GM12878 (cell line): ENCODE measurements at regions of chr1 and their contacts with region 1.

Region 1: DNA sequence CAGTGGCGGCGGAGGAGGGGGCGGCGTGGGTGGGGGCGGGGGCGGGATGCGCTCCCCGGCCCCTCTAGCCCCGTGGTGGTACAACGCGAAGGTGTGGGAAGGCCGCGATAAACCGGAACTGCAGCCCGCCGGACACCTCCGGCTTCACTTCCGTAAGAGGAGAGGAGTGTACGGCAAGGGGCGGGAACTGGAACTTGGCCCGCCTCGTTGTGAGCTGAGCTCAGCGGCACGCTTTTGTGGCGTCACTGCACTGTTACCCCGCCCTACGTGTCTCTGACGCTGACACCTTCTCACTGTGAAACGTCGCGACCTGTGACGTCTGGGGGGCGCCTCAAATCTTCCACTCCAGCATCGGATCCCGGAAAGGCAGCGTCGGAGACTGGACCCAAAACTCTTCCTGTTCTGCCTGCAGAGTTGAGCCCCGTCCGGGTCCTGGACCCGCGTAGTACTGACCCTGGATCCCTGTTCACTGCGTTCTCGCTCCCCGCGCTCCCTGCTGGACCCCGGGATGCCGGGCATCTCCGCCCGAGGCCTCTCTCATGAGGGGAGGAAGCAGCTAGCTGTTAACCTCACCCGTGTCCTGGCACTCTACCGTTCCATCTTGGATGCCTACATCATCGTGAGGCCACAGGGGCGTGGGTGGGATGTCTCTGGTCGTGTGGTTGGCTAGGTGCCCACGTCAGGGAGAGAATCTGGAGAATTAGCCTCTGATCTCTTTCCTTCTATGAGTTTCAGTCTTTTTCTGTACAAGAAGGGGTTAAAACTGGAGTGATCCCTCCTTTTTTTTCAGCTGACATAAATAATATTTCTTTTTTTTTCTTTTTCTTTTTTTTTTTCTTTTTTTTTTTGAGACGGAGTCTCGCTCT is at the start of gene ISG20L2:
- DNase-seq: peak; percentile 92
- ATAC-seq: peak; percentile 85
- H3K4me3 ChIP-seq: peak within 1 kb of the TSS; percentile 100
- H3K27ac ChIP-seq: peak within 1 kb of the TSS; percentile 91
- H3K4me1 ChIP-seq: peaks cover 9% of the 10 kb centered on the region
- H3K27me3 ChIP-seq: no peaks in the 10 kb centered on the region
- CTCF ChIP-seq: no peak; a peak in 1 of 6 replicates
- EP300 ChIP-seq: peak in 1 of 2 experiments; percentile 14; a peak in 1 of 4 replicates
- POLR2A ChIP-seq: peak; percentile 92
- RAD21 ChIP-seq: no peak
- polyA plus RNA-seq, gene ISG20L2: 16.4 to 26.1 TPM

Region 2: GRCh38 chr1:156677616-156678596 is 50.9 kb before region 1 on chr1:
- CTCF ChIA-PET with region 1: interaction called, 433 read pairs
- POLR2A ChIA-PET with region 1: interaction called, 3 read pairs
- RAD21 ChIA-PET with region 1: interaction called, 3 read pairs
- SMC1A ChIA-PET with region 1: interaction called, 13 read pairs
- in situ Hi-C with region 1: no loop called
- intact Hi-C with region 1: no loop called
- DNase-seq: no peak
- ATAC-seq: peak; percentile 70
- H3K4me3 ChIP-seq: no peak overlapping the region
- H3K27ac ChIP-seq: no peak overlapping the region
- H3K4me1 ChIP-seq: peaks cover 9% of the 10 kb centered on the region
- H3K27me3 ChIP-seq: peaks cover 16 to 21% of the 10 kb centered on the region in 2 experiments
- CTCF ChIP-seq: peak; percentile 79 to 86 (median 83)
- EP300 ChIP-seq: no peak
- POLR2A ChIP-seq: no peak
- RAD21 ChIP-seq: peak; percentile 96

Region 3: GRCh38 chr1:156712626-156713025 is 16.2 kb before region 1 on chr1:
- CTCF ChIA-PET with region 1: interaction called, 53 read pairs
- POLR2A ChIA-PET with region 1: interaction called, 5 read pairs
- RAD21 ChIA-PET with region 1: interaction called, 15 read pairs
- SMC1A ChIA-PET with region 1: interaction called, 15 read pairs
- in situ Hi-C with region 1: no loop called
- intact Hi-C with region 1: no loop called
- DNase-seq: no peak
- ATAC-seq: no peak
- H3K4me3 ChIP-seq: no peak overlapping the region
- H3K27ac ChIP-seq: no peak overlapping the region
- H3K4me1 ChIP-seq: no peaks in the 10 kb centered on the region
- H3K27me3 ChIP-seq: no peaks in the 10 kb centered on the region
- CTCF ChIP-seq: no peak
- EP300 ChIP-seq: no peak
- POLR2A ChIP-seq: no peak
- RAD21 ChIP-seq: no peak

Region 4: DNA sequence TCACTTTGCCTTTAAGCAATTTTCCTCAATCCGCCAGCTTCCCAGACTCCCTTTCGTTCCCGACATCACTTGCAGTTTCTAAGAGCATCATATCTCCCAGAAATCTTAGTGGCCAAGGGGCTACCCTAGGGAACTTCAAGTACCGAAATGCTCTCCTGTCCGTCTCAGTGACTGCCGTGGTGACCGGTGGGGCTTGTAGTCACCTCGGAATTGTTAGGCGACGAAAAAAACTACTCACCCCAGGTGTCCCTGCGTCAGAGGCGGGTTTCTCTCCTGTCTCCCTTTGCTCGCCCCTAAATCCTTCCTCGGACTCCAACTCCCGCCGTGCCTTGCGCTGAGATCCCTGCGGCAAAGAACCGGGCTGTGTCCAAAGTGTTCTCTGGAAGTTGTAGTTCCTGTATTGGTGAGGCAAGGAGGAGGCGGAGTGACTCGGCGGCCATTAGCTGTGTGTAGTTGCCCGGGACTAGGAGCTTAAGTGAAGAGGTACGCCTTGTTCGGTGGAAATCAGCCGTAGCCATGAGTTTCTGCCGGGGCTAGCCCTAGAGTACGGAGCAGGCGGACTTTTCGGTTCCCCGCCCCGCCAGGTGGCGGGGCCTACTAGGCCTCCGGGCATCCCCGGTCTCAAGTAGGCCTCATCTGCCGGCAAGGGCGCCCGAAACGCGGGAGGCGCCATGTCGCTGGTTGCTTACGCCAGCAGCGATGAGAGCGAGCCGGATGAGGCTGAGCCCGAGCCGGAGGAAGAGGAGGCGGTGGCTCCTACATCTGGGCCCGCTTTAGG is 38.5 kb after region 1 on chr1 and contains the start of gene PRCC:
- CTCF ChIA-PET with region 1: interaction called, 152 read pairs
- POLR2A ChIA-PET with region 1: interaction called, 71 read pairs
- RAD21 ChIA-PET with region 1: interaction called, 59 read pairs
- SMC1A ChIA-PET with region 1: interaction called, 108 read pairs
- in situ Hi-C with region 1: no loop called
- intact Hi-C with region 1: loop called (anchors 1 kb)
- DNase-seq: peak; percentile 100
- ATAC-seq: peak; percentile 94
- H3K4me3 ChIP-seq: peak within 1 kb of the TSS; percentile 92
- H3K27ac ChIP-seq: peak within 1 kb of the TSS; percentile 87
- H3K4me1 ChIP-seq: no peaks in the 10 kb centered on the region
- H3K27me3 ChIP-seq: no peaks in the 10 kb centered on the region
- CTCF ChIP-seq: no peak
- EP300 ChIP-seq: no peak
- POLR2A ChIP-seq: peak; percentile 84
- RAD21 ChIP-seq: no peak
- polyA plus RNA-seq, gene PRCC: 23.8 to 30.1 TPM

Region 5: GRCh38 chr1:156804572-156805243 is 75.9 kb after region 1 on chr1:
- CTCF ChIA-PET with region 1: interaction called, 162 read pairs
- POLR2A ChIA-PET with region 1: no interaction called
- RAD21 ChIA-PET with region 1: interaction called, 19 read pairs
- SMC1A ChIA-PET with region 1: interaction called, 60 read pairs
- in situ Hi-C with region 1: no loop called
- intact Hi-C with region 1: no loop called
- DNase-seq: no peak
- ATAC-seq: peak; percentile 39
- H3K4me3 ChIP-seq: no peak overlapping the region
- H3K27ac ChIP-seq: no peak overlapping the region
- H3K4me1 ChIP-seq: peaks cover 18% of the 10 kb centered on the region
- H3K27me3 ChIP-seq: no peaks in the 10 kb centered on the region
- CTCF ChIP-seq: no peak
- EP300 ChIP-seq: no peak
- POLR2A ChIP-seq: no peak
- RAD21 ChIP-seq: no peak

Region 6: GRCh38 chr1:156860113-156860627 is 131.3 kb after region 1 on chr1:
- CTCF ChIA-PET with region 1: interaction called, 214 read pairs
- POLR2A ChIA-PET with region 1: interaction called, 8 read pairs
- RAD21 ChIA-PET with region 1: interaction called, 115 read pairs
- SMC1A ChIA-PET with region 1: interaction called, 75 read pairs
- in situ Hi-C with region 1: no loop called
- intact Hi-C with region 1: loop called (anchors 1 kb)
- DNase-seq: no peak
- ATAC-seq: peak; percentile 84
- H3K4me3 ChIP-seq: peak overlapping the region; percentile 53; the same call in 1 of the 2 replicates
- H3K27ac ChIP-seq: no peak overlapping the region
- H3K4me1 ChIP-seq: peaks cover 26% of the 10 kb centered on the region
- H3K27me3 ChIP-seq: peaks cover 8 to 22% of the 10 kb centered on the region in 2 experiments
- CTCF ChIP-seq: peak; percentile 63 to 91 (median 77)
- EP300 ChIP-seq: no peak
- POLR2A ChIP-seq: no peak
- RAD21 ChIP-seq: peak; percentile 80